Calu3 (cell line): ENCODE measurements at regions of chr2 and their contacts with region 1.

Region 1: DNA sequence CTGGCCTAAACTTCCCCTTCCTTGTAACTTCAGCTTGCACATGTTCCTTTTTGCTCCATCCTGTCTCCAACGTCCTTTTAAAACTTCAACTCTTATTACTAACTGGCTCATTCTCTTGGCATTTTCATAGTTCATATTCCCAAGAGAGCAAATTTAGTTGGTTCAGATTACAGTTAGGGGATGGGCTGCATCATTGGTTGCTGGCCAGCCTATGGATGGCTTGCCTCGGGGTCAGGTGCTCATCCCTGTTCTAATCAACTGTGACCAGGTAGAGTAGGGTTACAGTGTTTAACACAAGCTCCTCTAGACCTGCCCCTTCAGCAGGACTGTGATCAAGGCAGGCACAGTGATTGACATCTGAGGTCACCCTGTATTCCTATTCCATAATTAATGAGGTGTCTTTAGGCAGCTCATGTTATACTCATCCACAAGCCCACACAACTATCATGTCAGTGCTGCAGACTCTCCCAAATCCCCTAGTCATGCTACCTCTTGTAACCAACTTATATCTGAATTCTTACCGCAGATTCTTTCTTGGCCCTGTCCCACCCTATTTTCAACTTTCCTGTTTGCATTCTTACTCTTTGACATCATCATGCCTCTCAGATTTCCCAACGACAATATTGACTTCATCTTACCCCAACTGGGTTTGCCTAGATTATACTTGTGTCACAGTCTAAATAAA is 293.3 kb downstream of the MTX2 start:
- DNase-seq: peak; percentile 49
- H3K4me3 Mint-ChIP-seq: peak overlapping the region; percentile 6
- H3K27ac Mint-ChIP-seq: peak overlapping the region; percentile 74
- H3K4me1 Mint-ChIP-seq: peaks cover 34% of the 10 kb centered on the region
- H3K27me3 Mint-ChIP-seq: no peaks in the 10 kb centered on the region
- CTCF ChIP-seq: no peak

Region 2: GRCh38 chr2:176544991-176545956 is 17.2 kb before region 1 on chr2:
- CTCF ChIA-PET with region 1: no interaction called
- intact Hi-C with region 1: loop called (anchors 1 kb)
- DNase-seq: no peak
- H3K4me3 Mint-ChIP-seq: no peak overlapping the region
- H3K27ac Mint-ChIP-seq: no peak overlapping the region
- H3K4me1 Mint-ChIP-seq: no peaks in the 10 kb centered on the region
- H3K27me3 Mint-ChIP-seq: no peaks in the 10 kb centered on the region
- CTCF ChIP-seq: no peak

Region 3: GRCh38 chr2:176589825-176590440 is 27.4 kb after region 1 on chr2:
- CTCF ChIA-PET with region 1: interaction called, 10 read pairs
- intact Hi-C with region 1: no loop called
- DNase-seq: no peak
- H3K4me3 Mint-ChIP-seq: no peak overlapping the region
- H3K27ac Mint-ChIP-seq: no peak overlapping the region
- H3K4me1 Mint-ChIP-seq: peaks cover 58% of the 10 kb centered on the region
- H3K27me3 Mint-ChIP-seq: no peaks in the 10 kb centered on the region
- CTCF ChIP-seq: no peak